Activated CD4-positive, alpha-beta memory T cell treated with anti-CD3 and anti-CD28 coated beads, Interleukin-2, amount 10 ng/mL, durations not matched to agents 7 days and 5 days (primary cell): ENCODE measurements at regions of chr1 and their contacts with region 1.

Region 1: GRCh38 chr1:89310505-89310904 is 37.8 kb upstream of the GBP5 start:
- DNase-seq: no peak
- H3K4me3 Mint-ChIP-seq: peak overlapping the region; percentile 26
- H3K27ac Mint-ChIP-seq: peak overlapping the region; percentile 94
- H3K4me1 Mint-ChIP-seq: peaks cover 44% of the 10 kb centered on the region
- H3K27me3 Mint-ChIP-seq: no peaks in the 10 kb centered on the region

Region 2: DNA sequence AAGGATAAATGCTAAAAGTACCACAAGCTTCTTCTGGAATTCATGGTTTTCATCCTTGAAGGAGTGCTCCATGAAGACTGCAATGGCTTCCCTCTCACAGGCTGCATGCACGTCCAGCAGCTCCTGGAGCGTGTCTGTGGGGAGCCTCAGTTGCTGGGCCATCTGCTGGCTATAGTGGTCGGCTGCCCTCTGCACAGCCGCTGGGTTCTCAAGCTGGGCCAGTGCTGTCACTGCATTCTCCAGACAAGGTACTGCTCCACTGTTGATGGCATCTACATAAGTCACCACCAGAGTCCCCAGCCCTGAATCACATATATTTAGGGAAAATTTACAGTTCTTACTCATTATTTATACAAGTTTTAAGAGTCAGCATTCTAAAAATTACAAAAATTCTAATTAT is 120.5 kb before region 1 on chr1:
- CTCF ChIA-PET with region 1: no interaction called
- POLR2A ChIA-PET with region 1: no interaction called
- DNase-seq: no peak
- H3K4me3 Mint-ChIP-seq: no peak overlapping the region
- H3K27ac Mint-ChIP-seq: no peak overlapping the region
- H3K4me1 Mint-ChIP-seq: peaks cover 16% of the 10 kb centered on the region
- H3K27me3 Mint-ChIP-seq: no peaks in the 10 kb centered on the region

Region 3: DNA sequence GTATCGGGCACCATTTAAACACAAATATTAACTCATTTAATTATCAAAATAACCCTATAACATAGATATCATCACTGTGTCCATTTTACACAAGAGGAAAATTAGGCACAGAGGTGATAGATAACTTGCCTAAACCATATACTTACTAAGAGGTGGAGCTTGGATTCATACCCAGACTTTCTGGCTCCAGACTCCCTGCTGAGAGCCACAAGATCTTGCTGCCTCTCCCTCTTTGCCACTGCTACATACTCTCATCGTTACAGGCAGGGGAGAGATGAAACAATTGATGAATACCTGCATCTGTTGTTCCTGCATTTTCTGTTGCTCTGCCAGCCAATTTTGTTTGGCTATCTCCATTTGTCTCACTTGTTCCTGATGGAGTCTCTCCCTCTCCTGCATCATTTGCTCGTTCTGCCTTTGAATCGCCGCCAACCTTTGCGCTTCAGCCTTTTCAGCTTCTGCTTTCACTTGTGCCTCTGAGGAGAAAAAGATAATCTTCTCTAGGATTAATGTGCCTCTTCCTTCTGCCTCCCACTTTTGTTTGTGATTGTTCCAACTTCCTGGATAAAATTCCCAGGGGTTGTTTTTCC is 48.5 kb before region 1 on chr1:
- CTCF ChIA-PET with region 1: interaction called, 5 read pairs
- POLR2A ChIA-PET with region 1: interaction called, 10 read pairs
- DNase-seq: no peak
- H3K4me3 Mint-ChIP-seq: peak overlapping the region; percentile 34
- H3K27ac Mint-ChIP-seq: peak overlapping the region; percentile 84
- H3K4me1 Mint-ChIP-seq: peaks cover 75% of the 10 kb centered on the region
- H3K27me3 Mint-ChIP-seq: no peaks in the 10 kb centered on the region

Region 4: DNA sequence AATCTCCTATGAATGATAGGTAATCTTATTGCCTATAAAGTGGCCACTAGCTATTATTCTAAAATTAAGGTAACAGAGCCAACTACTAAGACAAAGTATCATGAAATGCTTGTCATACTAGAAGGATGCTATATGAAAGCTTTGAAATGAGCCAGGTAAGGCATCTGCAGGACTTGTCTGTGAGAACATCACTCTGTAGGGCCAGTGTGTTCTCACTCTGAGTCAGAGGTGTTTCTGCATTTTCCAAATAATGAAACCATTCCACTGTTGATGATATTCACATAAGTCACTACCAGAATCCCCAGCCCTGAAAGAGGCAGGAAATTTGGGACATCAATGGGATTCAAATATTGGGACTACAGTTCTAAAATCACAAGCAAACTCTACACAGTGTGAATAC is 12.0 kb before region 1 on chr1:
- CTCF ChIA-PET with region 1: interaction called, 8 read pairs
- POLR2A ChIA-PET with region 1: interaction called, 29 read pairs
- DNase-seq: no peak
- H3K4me3 Mint-ChIP-seq: no peak overlapping the region
- H3K27ac Mint-ChIP-seq: no peak overlapping the region
- H3K4me1 Mint-ChIP-seq: peaks cover 59% of the 10 kb centered on the region
- H3K27me3 Mint-ChIP-seq: peaks cover 4% of the 10 kb centered on the region

Region 5: GRCh38 chr1:89358287-89358893 is 47.9 kb after region 1 on chr1:
- CTCF ChIA-PET with region 1: interaction called, 13 read pairs
- POLR2A ChIA-PET with region 1: interaction called, 8 read pairs
- DNase-seq: peak; percentile 86
- H3K4me3 Mint-ChIP-seq: peak overlapping the region; percentile 29
- H3K27ac Mint-ChIP-seq: no peak overlapping the region
- H3K4me1 Mint-ChIP-seq: peaks cover 47% of the 10 kb centered on the region
- H3K27me3 Mint-ChIP-seq: no peaks in the 10 kb centered on the region